ENCODE measurements at regions of chr21 and their contacts with region 1.

Region 1: GRCh38 chr21:27700974-27701614 is 734.2 kb upstream of the ADAMTS5 start:
- DNase-seq: peak; percentile 81
- H3K4me3 ChIP-seq: no peak overlapping the region
- H3K27ac ChIP-seq: no peak overlapping the region
- H3K4me1 ChIP-seq: no peaks in the 10 kb centered on the region
- H3K27me3 ChIP-seq: no peaks in the 10 kb centered on the region
- CTCF ChIP-seq: peak; percentile 78 to 82
- POLR2A ChIP-seq: no peak

Region 2: DNA sequence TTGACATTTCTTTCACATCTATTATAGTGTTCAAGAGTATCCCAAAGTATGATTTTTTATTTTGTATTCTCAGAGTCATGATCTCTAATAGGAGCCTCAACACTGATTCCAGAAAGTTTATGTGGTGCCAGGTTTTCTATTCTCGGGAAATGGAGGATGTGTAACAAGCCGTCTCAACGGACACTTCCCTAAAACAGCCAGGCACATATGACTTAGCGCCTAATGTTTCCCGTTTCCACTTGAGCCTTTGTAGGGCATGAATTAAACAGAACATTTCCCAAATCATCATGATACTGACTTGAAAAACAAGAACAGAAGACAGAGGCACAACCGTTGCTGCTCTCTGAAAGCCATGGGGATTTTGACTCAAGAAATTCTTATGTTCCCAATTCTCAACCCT is 1136.0 kb before region 1 on chr21:
- CTCF ChIA-PET with region 1: no interaction called
- POLR2A ChIA-PET with region 1: no interaction called
- dilution Hi-C with region 1: no loop called
- intact Hi-C with region 1: no loop called
- DNase-seq: peak; percentile 32
- H3K4me3 ChIP-seq: no peak overlapping the region
- H3K27ac ChIP-seq: no peak overlapping the region
- H3K4me1 ChIP-seq: peaks cover 30% of the 10 kb centered on the region
- H3K27me3 ChIP-seq: no peaks in the 10 kb centered on the region
- CTCF ChIP-seq: no peak
- POLR2A ChIP-seq: no peak

Region 3: DNA sequence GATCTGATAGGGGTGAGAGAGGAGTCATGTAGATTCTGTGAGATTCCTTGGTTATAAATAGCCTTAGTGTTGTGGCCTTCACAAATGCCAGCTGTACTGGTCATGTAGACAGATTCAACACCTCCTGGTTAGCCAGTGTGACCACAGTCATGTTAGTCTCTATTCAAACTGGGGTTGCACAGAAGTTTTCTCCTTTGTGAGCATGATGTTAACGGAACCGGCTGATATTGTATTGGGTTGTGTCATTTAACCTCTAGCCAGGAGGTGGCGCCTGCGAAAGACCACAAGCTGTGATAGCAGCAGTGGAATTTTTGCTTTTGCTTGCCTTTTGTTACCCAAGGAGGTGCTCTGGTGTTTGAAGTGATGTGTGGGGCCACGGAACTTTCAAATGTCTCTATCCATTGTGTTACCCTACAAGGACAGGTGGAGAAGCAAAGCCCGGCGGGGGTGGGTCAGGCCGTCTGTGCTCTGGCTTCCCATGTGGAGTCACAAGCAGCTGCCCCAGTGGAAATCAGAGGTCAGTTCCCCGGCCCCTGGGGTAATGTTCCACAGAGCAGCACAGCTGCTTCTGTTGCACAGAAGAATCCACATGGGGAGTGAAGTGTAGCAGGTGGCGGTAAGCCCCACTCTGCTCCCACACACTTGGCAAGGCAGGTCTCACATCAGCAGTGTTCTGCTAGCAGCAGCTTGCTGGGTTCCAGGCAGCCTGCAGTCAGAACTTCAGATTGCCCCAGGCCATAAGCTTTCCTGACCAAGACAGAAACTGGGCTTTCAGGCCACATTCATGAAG is 968.5 kb before region 1 on chr21:
- CTCF ChIA-PET with region 1: interaction called, 19 read pairs
- POLR2A ChIA-PET with region 1: no interaction called
- dilution Hi-C with region 1: no loop called
- intact Hi-C with region 1: no loop called
- DNase-seq: peak; percentile 38
- H3K4me3 ChIP-seq: no peak overlapping the region
- H3K27ac ChIP-seq: no peak overlapping the region
- H3K4me1 ChIP-seq: no peaks in the 10 kb centered on the region
- H3K27me3 ChIP-seq: no peaks in the 10 kb centered on the region
- CTCF ChIP-seq: peak; percentile 48 to 75
- POLR2A ChIP-seq: no peak

Region 4: DNA sequence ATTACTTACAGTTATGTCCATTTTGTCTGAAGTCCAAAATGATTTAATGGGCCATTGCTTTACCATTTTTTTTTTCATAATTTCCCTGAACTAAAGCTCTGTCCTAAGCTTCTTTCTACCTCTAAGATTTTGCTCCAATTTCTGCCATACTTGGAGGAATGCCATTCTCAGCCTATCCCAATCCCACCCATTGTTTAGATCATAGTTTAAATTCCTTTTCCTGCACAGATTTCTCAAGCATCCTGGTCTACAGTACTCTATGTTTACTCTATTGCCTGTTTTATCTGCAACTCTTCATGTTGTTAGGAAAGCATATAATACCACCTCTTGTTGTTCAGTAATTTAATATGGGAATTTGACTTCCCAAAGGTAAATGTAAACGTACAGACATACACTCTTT is 886.7 kb before region 1 on chr21:
- CTCF ChIA-PET with region 1: interaction called, 24 read pairs
- POLR2A ChIA-PET with region 1: no interaction called
- dilution Hi-C with region 1: no loop called
- intact Hi-C with region 1: no loop called
- DNase-seq: no peak
- H3K4me3 ChIP-seq: no peak overlapping the region
- H3K27ac ChIP-seq: no peak overlapping the region
- H3K4me1 ChIP-seq: no peaks in the 10 kb centered on the region
- H3K27me3 ChIP-seq: peaks cover 2% of the 10 kb centered on the region in 2 experiments
- CTCF ChIP-seq: no peak
- POLR2A ChIP-seq: no peak

Region 5: GRCh38 chr21:26881504-26882228 is 819.4 kb before region 1 on chr21:
- CTCF ChIA-PET with region 1: interaction called, 151 read pairs
- POLR2A ChIA-PET with region 1: no interaction called
- dilution Hi-C with region 1: no loop called
- intact Hi-C with region 1: loop called (anchors 1 kb)
- DNase-seq: peak; percentile 39
- H3K4me3 ChIP-seq: no peak overlapping the region
- H3K27ac ChIP-seq: no peak overlapping the region
- H3K4me1 ChIP-seq: no peaks in the 10 kb centered on the region
- H3K27me3 ChIP-seq: no peaks in the 10 kb centered on the region
- CTCF ChIP-seq: peak in 1 of 2 donors; percentile 2
- POLR2A ChIP-seq: no peak

Region 6: DNA sequence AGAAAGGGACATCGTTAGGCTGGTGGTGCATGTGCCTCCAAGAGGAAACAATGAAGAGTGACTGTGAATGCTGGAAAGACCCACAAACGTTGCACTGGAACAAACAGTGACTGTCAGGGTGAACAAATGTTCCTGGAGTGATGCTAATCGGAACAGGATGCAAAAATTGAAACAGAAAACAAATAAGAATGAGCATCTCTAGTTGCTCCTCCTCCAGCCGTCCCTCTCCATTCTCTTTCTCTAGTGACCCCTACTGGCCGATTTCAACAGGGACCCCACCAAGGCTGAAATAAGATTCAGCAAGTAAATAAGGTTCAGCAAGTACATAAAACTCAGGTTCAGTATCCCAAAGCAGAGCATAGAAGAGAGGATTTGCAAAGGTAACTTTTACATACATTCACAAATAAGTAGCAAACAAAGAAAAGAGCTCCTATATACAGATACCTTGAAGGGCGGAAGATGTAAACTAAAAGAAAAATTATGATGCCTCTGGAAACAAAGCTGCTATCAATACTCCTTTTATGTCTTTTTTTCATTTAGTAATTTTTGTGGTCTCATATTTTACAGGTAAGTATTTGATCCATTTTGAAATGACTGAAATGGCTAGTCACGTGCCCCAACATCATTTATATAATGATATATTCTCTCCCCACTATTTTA is 101.9 kb after region 1 on chr21:
- CTCF ChIA-PET with region 1: interaction called, 3 read pairs
- POLR2A ChIA-PET with region 1: no interaction called
- dilution Hi-C with region 1: no loop called
- intact Hi-C with region 1: loop called (anchors 5 kb)
- DNase-seq: peak; percentile 39
- H3K4me3 ChIP-seq: no peak overlapping the region
- H3K27ac ChIP-seq: no peak overlapping the region
- H3K4me1 ChIP-seq: no peaks in the 10 kb centered on the region
- H3K27me3 ChIP-seq: no peaks in the 10 kb centered on the region
- CTCF ChIP-seq: peak; percentile 55 to 65
- POLR2A ChIP-seq: no peak

Region 7: GRCh38 chr21:28740125-28740524 is 1039.0 kb after region 1 on chr21:
- CTCF ChIA-PET with region 1: interaction called, 169 read pairs
- POLR2A ChIA-PET with region 1: no interaction called
- dilution Hi-C with region 1: no loop called
- intact Hi-C with region 1: loop called (anchors 1 kb)
- DNase-seq: no peak
- H3K4me3 ChIP-seq: no peak overlapping the region
- H3K27ac ChIP-seq: no peak overlapping the region
- H3K4me1 ChIP-seq: peaks cover 8% of the 10 kb centered on the region
- H3K27me3 ChIP-seq: no peaks in the 10 kb centered on the region
- CTCF ChIP-seq: no peak
- POLR2A ChIP-seq: no peak

Measured in endothelial cell of umbilical vein (primary cell).